IMR-90 (cell line): ENCODE measurements at regions of chrX and their contacts with region 1.

Region 1: DNA sequence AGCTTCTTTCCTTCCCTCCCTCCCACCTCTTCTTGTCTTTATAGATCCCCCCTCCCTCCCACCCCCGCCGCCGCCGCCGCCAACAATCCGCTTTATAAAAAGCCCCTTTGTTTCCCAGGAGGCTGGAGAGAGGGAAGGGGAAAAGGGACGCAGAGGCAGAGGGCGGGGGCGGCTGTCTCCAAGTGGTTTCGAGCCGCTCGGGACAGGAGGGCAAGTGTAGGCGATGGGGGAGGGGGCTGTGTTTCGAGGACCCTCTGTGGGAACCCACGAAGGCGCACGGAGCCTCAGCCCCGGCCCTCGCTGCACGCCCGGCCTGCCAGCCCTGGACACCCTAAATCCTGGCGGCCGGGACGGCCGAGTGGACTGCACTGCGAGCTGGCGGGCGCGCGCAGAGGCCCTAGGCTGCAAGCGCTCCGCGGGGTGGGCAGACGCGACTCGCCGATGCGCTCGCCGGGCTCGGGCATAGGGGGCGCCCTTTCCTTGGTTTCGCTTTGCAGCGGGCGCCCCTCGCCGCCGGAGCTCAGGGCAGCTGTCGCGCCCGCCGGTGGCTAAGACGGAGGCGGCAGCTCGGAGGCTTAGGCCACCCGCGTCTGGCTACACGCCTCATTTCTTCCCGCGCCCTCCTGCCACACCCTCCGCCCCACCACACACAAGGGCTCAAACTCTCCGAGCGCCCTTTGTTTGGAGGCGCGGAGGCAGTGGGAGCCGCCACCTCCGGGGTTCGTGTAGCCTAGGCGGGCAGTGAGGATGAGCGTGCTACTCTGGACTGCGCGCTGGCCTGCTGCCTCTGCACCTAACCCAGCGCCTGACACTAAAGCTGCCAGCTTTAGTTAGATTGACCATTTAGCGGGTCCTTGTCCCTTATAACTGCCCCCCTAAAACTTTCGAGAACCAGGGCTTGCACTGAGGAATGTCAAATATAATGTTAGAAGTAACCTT is 2.2 kb downstream of the MAMLD1 start:
- DNase-seq: peak; percentile 50
- ATAC-seq: peak; percentile 30
- H3K4me3 ChIP-seq: peak overlapping the region; percentile 83
- H3K27ac ChIP-seq: peak overlapping the region; percentile 92
- H3K4me1 ChIP-seq: peaks cover 2% of the 10 kb centered on the region
- H3K27me3 ChIP-seq: no peaks in the 10 kb centered on the region
- CTCF ChIP-seq: peak; percentile 56
- POLR2A ChIP-seq: 0 out of 2 replicates have a peak, but pooled peaks have one; percentile 8
- RAD21 ChIP-seq: peak; percentile 32

Region 2: GRCh38 chrX:149962859-149963757 is 402.2 kb before region 1 on chrX:
- CTCF ChIA-PET with region 1: no interaction called
- POLR2A ChIA-PET with region 1: no interaction called
- dilution Hi-C with region 1: no loop called
- in situ Hi-C with region 1: loop called (anchors 25 kb)
- intact Hi-C with region 1: loop called (anchors 1 kb)
- DNase-seq: peak; percentile 69
- ATAC-seq: peak; percentile 97
- H3K4me3 ChIP-seq: no peak overlapping the region
- H3K27ac ChIP-seq: no peak overlapping the region
- H3K4me1 ChIP-seq: no peaks in the 10 kb centered on the region
- H3K27me3 ChIP-seq: no peaks in the 10 kb centered on the region
- CTCF ChIP-seq: peak; percentile 75
- POLR2A ChIP-seq: no peak
- RAD21 ChIP-seq: peak; percentile 91

Region 3: DNA sequence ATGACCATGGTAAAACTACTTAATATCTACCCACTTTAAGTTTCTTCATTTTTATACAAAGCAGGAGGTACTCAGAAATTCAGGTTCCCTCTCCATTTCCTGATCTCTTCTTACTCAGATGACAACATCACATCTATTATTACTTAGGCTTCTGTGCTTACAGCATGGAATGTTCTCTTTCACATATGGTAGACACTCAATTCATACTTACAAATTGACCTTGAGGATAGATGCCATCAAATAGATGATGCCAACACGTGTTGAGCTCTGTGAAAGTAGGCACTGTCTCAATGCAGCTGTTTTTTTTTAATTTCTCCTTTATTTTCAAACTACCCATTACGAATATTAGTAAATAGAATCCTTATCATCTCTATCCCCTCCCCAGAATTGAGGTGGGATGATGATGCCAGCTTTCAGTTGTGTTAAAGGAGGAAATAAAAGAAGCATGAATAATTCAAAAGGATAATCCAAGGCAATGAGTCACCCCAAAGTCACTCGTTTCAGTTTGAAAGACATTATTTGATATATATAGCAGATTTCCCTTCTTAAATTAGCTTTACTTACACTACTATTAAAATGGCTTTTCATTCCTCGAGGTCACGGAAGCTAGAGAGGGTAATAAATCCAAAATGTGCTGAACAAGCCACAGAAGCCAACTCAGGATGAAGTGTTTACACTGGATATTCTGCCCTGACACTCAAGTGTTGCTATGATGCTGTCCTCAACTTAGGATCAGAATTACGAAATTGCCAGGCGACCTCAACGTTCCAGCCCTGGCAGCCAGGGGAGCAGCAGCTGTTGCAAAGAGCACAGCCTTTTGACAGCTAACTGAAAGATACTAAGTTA is 302.8 kb before region 1 on chrX:
- CTCF ChIA-PET with region 1: no interaction called
- POLR2A ChIA-PET with region 1: no interaction called
- dilution Hi-C with region 1: no loop called
- in situ Hi-C with region 1: no loop called
- intact Hi-C with region 1: loop called (anchors 1 kb)
- DNase-seq: peak; percentile 69
- ATAC-seq: peak; percentile 62
- H3K4me3 ChIP-seq: no peak overlapping the region
- H3K27ac ChIP-seq: no peak overlapping the region
- H3K4me1 ChIP-seq: peaks cover 8% of the 10 kb centered on the region
- H3K27me3 ChIP-seq: no peaks in the 10 kb centered on the region
- CTCF ChIP-seq: no peak
- POLR2A ChIP-seq: no peak
- RAD21 ChIP-seq: 0 out of 2 replicates have a peak, but pooled peaks have one; percentile 2

Region 4: DNA sequence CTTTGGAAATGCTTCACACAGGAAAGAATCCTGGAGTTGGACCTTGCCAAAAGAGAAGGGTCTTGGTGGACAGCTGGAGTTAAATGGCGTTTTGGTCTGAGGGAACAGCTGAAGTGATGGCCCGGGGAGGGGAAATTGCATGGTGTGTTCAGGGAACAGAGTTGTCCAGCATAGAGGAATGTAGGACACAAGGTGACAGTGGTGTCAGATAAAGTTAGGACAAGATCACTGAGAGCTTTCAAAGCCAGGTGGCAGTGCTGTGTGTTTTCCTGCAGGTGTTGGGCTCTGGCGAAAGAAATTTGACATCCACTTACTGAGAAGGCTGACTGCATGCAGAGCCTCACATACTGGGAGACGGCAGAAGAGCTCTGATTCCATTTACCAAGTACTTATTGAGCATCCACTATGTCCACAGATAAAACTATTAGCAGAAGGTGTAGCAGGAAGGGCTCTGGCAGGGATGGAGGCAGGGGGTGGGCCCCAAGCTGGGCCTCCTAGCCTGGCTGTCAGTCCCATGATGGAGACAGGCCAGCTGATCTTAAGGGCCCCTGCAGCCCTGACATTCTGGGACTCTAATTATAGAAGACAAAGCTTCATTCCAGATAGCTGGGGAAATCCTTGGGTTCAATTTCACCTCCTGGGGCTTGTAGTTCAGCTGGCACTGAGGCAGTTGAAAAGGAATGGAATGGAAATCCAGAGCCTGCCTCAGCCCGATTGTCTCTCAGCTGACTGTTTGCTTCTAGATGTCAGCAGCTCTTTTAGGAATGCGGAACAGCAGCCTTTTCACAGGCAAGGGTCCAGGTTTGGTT is 152.4 kb before region 1 on chrX:
- CTCF ChIA-PET with region 1: no interaction called
- POLR2A ChIA-PET with region 1: no interaction called
- dilution Hi-C with region 1: no loop called
- in situ Hi-C with region 1: no loop called
- intact Hi-C with region 1: loop called (anchors 1 kb)
- DNase-seq: peak; percentile 52
- ATAC-seq: peak; percentile 65
- H3K4me3 ChIP-seq: no peak overlapping the region
- H3K27ac ChIP-seq: no peak overlapping the region
- H3K4me1 ChIP-seq: 0 out of 2 replicates have a peak, but pooled peaks cover 5% of the 10 kb centered on the region
- H3K27me3 ChIP-seq: no peaks in the 10 kb centered on the region
- CTCF ChIP-seq: no peak
- POLR2A ChIP-seq: no peak
- RAD21 ChIP-seq: no peak

Region 5: GRCh38 chrX:150581093-150581804 is 215.9 kb after region 1 on chrX:
- CTCF ChIA-PET with region 1: no interaction called
- POLR2A ChIA-PET with region 1: no interaction called
- dilution Hi-C with region 1: no loop called
- in situ Hi-C with region 1: no loop called
- intact Hi-C with region 1: loop called (anchors 1 kb)
- DNase-seq: peak; percentile 83
- ATAC-seq: peak; percentile 93
- H3K4me3 ChIP-seq: no peak overlapping the region
- H3K27ac ChIP-seq: no peak overlapping the region
- H3K4me1 ChIP-seq: no peaks in the 10 kb centered on the region
- H3K27me3 ChIP-seq: no peaks in the 10 kb centered on the region
- CTCF ChIP-seq: no peak
- POLR2A ChIP-seq: no peak
- RAD21 ChIP-seq: no peak

Region 6: GRCh38 chrX:150715184-150715583 is 349.9 kb after region 1 on chrX:
- CTCF ChIA-PET with region 1: no interaction called
- POLR2A ChIA-PET with region 1: no interaction called
- dilution Hi-C with region 1: no loop called
- in situ Hi-C with region 1: loop called (anchors 25 kb)
- intact Hi-C with region 1: loop called (anchors 1 kb)
- DNase-seq: no peak
- ATAC-seq: no peak
- H3K4me3 ChIP-seq: no peak overlapping the region
- H3K27ac ChIP-seq: no peak overlapping the region
- H3K4me1 ChIP-seq: 0 out of 2 replicates have a peak, but pooled peaks cover 2% of the 10 kb centered on the region
- H3K27me3 ChIP-seq: no peaks in the 10 kb centered on the region
- CTCF ChIP-seq: no peak
- POLR2A ChIP-seq: no peak
- RAD21 ChIP-seq: no peak